Posterior vena cava (tissue), 2 donors: ENCODE measurements at regions of chr14 and their contacts with region 1.

Region 1: DNA sequence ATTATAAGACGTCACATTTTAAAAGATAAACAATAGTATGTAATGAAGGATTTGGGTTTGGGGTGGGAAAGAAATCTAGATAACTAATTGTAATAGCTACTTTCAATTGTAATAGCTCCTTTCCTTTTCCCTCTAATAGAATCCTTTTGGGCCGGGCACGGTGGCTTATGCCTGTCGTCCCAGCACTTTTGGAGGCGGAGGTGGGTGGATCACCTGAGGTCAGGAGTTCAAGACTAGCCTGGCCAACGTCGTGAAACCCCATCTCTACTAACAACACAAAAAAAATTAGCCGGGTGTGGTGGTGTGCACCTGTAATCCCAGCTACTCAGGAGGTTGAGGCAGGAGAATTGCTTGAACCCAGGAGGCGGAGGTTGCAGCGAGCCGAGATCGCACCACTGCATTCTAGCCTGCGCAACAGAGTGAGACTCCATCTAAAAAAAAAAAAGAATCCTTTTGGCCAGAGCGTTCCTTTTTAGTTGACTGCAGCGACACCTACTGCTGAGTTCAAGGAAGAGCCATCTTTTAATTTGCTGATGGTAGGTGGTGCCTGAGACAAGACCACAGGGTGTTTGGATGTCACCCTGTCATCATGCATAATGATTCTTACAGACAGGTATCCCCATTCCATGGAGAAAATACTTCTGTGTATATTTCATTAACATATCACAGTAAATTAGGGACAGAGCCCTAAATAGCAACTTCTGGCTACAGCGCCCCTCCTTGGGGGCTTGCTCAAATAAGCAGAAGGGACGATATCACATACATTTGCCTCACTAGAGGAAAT is 79.5 kb downstream of the ARMH4 start:
- DNase-seq: no peak

Region 2: GRCh38 chr14:57486767-57487379 is 585.6 kb before region 1 on chr14:
- intact Hi-C with region 1: loop called in 1 of 2 experiments (anchors 10 kb)
- DNase-seq: no peak

Region 3: GRCh38 chr14:57533214-57533613 is 539.3 kb before region 1 on chr14:
- intact Hi-C with region 1: loop called in 1 of 2 experiments (anchors 5 kb)
- DNase-seq: no peak